ENCODE measurements at regions of chr10 and their contacts with region 1.

Region 1: GRCh38 chr10:35563261-35563891 is 41.8 kb upstream of the GJD4 start:
- DNase-seq: peak; percentile 27 to 65
- H3K4me3 ChIP-seq: no peak overlapping the region
- H3K27ac ChIP-seq: no peak overlapping the region
- H3K4me1 ChIP-seq: no peaks in the 10 kb centered on the region; a peak in 1 of 7 replicates
- H3K27me3 ChIP-seq: no peaks in the 10 kb centered on the region
- CTCF ChIP-seq: peak; percentile 94 to 99 (median 95)
- EP300 ChIP-seq: no peak
- POLR2A ChIP-seq: no peak
- RAD21 ChIP-seq: peak; percentile 85 to 88

Region 2: GRCh38 chr10:35379226-35380137 is 183.9 kb before region 1 on chr10:
- CTCF ChIA-PET with region 1: interaction called, 10 read pairs
- POLR2A ChIA-PET with region 1: no interaction called
- DNase-seq: peak in 1 of 2 experiments; percentile 55
- H3K4me3 ChIP-seq: no peak overlapping the region
- H3K27ac ChIP-seq: no peak overlapping the region
- H3K4me1 ChIP-seq: peaks cover 4 to 10% (median 6%) of the 10 kb centered on the region in 4 experiments
- H3K27me3 ChIP-seq: no peaks in the 10 kb centered on the region
- CTCF ChIP-seq: peak in 2 of 3 experiments; percentile 34 to 59; a peak in 3 of 4 replicates
- EP300 ChIP-seq: no peak
- POLR2A ChIP-seq: no peak
- RAD21 ChIP-seq: peak; percentile 56 to 70

Region 3: GRCh38 chr10:35536789-35537188 is 26.6 kb before region 1 on chr10:
- CTCF ChIA-PET with region 1: no interaction called
- POLR2A ChIA-PET with region 1: no interaction called
- DNase-seq: no peak
- H3K4me3 ChIP-seq: no peak overlapping the region
- H3K27ac ChIP-seq: no peak overlapping the region
- H3K4me1 ChIP-seq: no peaks in the 10 kb centered on the region
- H3K27me3 ChIP-seq: no peaks in the 10 kb centered on the region
- CTCF ChIP-seq: no peak
- EP300 ChIP-seq: no peak
- POLR2A ChIP-seq: no peak
- RAD21 ChIP-seq: no peak

Region 4: GRCh38 chr10:35546824-35547273 is 16.5 kb before region 1 on chr10:
- CTCF ChIA-PET with region 1: interaction called, 11 read pairs
- POLR2A ChIA-PET with region 1: no interaction called
- DNase-seq: no peak
- H3K4me3 ChIP-seq: no peak overlapping the region
- H3K27ac ChIP-seq: no peak overlapping the region
- H3K4me1 ChIP-seq: no peaks in the 10 kb centered on the region
- H3K27me3 ChIP-seq: no peaks in the 10 kb centered on the region
- CTCF ChIP-seq: peak; percentile 26 to 34 (median 32); a peak in 3 of 4 replicates
- EP300 ChIP-seq: no peak
- POLR2A ChIP-seq: no peak
- RAD21 ChIP-seq: peak; percentile 33 to 49; a peak in 3 of 4 replicates

Region 5: DNA sequence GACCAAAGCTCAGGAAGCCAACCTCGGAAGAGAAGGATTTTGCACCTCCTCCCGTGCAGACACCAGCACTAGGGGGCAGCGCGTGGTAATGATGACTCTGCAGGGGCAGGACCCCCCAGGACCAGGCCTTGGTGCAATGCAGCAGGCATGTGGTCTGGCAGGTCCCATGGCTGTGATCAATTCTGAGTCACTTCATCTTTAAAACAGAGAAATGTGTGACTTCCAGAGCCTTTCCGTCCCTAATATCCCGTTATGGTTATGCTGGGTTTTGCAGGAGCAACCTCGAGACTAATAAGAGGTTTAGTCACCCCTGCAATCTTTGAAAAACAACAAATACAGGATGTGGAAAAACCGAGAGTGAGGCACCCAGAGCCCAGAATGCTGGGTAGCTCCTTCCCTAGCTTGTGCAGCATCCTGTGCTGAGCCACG is 11.6 kb after region 1 on chr10:
- CTCF ChIA-PET with region 1: interaction called, 19 read pairs
- POLR2A ChIA-PET with region 1: no interaction called
- DNase-seq: peak; percentile 15 to 61
- H3K4me3 ChIP-seq: no peak overlapping the region
- H3K27ac ChIP-seq: no peak overlapping the region
- H3K4me1 ChIP-seq: peaks cover 1 to 6% (median 5%) of the 10 kb centered on the region in 4 experiments; a peak in 6 of 7 replicates
- H3K27me3 ChIP-seq: no peaks in the 10 kb centered on the region
- CTCF ChIP-seq: peak; percentile 46 to 67 (median 58)
- EP300 ChIP-seq: no peak
- POLR2A ChIP-seq: no peak
- RAD21 ChIP-seq: peak; percentile 40 to 50; a peak in 3 of 4 replicates